CD8-positive, alpha-beta T cell (primary cell): ENCODE measurements at regions of chr2 and their contacts with region 1.

Region 1: GRCh38 chr2:3405876-3406275 is 26.4 kb downstream of the TRAPPC12 start:
- DNase-seq: no peak
- ATAC-seq: no peak
- H3K4me3 ChIP-seq: no peak overlapping the region
- H3K4me3 Mint-ChIP-seq: no peak overlapping the region
- H3K27ac ChIP-seq: no peak overlapping the region
- H3K27ac Mint-ChIP-seq: no peak overlapping the region
- H3K4me1 ChIP-seq: no peaks in the 10 kb centered on the region
- H3K4me1 Mint-ChIP-seq: peaks cover 19% of the 10 kb centered on the region
- H3K27me3 ChIP-seq: no peaks in the 10 kb centered on the region
- H3K27me3 Mint-ChIP-seq: no peaks in the 10 kb centered on the region
- CTCF ChIP-seq: no peak

Region 2: DNA sequence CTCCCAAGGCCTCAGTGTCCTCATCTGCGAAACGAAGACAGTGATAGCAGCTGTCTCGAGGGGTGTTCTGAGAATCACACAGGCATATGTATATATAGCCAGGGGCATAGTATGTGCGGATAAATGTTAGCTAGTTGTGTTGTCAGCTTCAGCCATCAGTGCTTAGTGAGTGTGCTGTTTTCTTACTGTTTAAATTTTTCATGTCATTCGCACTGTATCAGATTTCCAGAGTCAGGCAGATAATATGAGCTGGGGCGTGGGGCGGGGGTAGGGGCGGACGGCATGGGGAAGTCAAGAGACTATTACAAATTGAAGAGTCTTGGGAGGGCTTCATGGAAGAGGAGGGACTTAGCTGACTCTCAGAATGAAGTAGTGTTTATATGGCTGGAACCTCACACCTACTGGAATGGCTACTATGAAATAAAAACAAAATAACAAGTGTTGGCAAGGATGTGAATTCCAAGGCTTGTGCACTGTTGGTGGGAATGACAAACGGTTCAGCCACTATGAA is 19.4 kb before region 1 on chr2:
- CTCF ChIA-PET with region 1: no interaction called
- POLR2A ChIA-PET with region 1: no interaction called
- intact Hi-C with region 1: loop called in 1 of 2 experiments (anchors 2 kb)
- DNase-seq: no peak
- ATAC-seq: no peak
- H3K4me3 ChIP-seq: no peak overlapping the region
- H3K4me3 Mint-ChIP-seq: no peak overlapping the region
- H3K27ac ChIP-seq: no peak overlapping the region
- H3K27ac Mint-ChIP-seq: no peak overlapping the region
- H3K4me1 ChIP-seq: peaks cover 4% of the 10 kb centered on the region
- H3K4me1 Mint-ChIP-seq: peaks cover 35% of the 10 kb centered on the region
- H3K27me3 ChIP-seq: no peaks in the 10 kb centered on the region
- H3K27me3 Mint-ChIP-seq: no peaks in the 10 kb centered on the region
- CTCF ChIP-seq: no peak